WTC11 (cell line): ENCODE measurements at regions of chr3 and their contacts with region 1.

Region 1: DNA sequence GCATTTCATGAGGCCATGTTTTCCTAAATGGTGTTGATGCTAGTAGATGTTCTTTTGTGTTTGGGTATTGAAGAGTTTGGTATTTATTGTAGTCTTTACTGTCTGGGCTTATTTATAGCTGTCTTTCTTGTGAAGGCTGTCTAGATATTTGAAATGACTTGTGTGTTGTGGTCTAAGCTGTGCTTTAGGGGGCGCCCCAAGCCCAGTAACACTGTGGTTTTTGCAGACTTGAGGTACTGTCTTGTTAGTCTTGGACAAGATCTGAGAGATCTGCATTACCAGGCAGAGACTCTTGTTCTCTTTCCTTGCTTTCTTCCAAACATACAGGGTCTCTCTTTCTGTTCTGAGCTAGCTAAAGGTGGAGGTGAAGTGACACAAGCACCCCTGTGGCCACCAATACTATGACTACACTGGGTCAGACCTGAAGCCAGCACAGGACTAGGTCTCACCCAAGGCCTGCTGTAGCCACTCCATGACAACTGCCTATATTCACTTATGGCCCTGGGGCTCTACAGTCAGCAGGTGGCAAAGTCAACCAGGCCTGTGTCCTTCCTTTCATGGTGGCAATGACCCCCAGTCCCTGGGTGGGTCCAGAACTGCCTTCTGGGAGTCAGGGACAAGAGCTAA is 152.1 kb upstream of the TBC1D5 start:
- DNase-seq: peak; percentile 75
- ATAC-seq: peak; percentile 97
- H3K4me3 Mint-ChIP-seq: no peak overlapping the region
- H3K27ac Mint-ChIP-seq: no peak overlapping the region
- H3K4me1 Mint-ChIP-seq: peaks cover 12% of the 10 kb centered on the region
- H3K27me3 Mint-ChIP-seq: no peaks in the 10 kb centered on the region
- CTCF ChIP-seq: peak; percentile 73

Region 2: GRCh38 chr3:17882981-17883380 is 11.6 kb before region 1 on chr3:
- CTCF ChIA-PET with region 1: interaction called, 11 read pairs
- POLR2A ChIA-PET with region 1: no interaction called
- DNase-seq: no peak
- ATAC-seq: no peak
- H3K4me3 Mint-ChIP-seq: no peak overlapping the region
- H3K27ac Mint-ChIP-seq: no peak overlapping the region
- H3K4me1 Mint-ChIP-seq: peaks cover 10% of the 10 kb centered on the region
- H3K27me3 Mint-ChIP-seq: no peaks in the 10 kb centered on the region
- CTCF ChIP-seq: no peak

Region 3: GRCh38 chr3:17979252-17979651 is 84.7 kb after region 1 on chr3:
- CTCF ChIA-PET with region 1: interaction called, 23 read pairs
- POLR2A ChIA-PET with region 1: no interaction called
- DNase-seq: no peak
- ATAC-seq: peak; percentile 60
- H3K4me3 Mint-ChIP-seq: no peak overlapping the region
- H3K27ac Mint-ChIP-seq: no peak overlapping the region
- H3K4me1 Mint-ChIP-seq: no peaks in the 10 kb centered on the region
- H3K27me3 Mint-ChIP-seq: no peaks in the 10 kb centered on the region
- CTCF ChIP-seq: no peak

Region 4: GRCh38 chr3:18295171-18295920 is 400.8 kb after region 1 on chr3:
- CTCF ChIA-PET with region 1: interaction called, 28 read pairs
- POLR2A ChIA-PET with region 1: no interaction called
- DNase-seq: peak; percentile 89
- ATAC-seq: peak; percentile 100
- H3K4me3 Mint-ChIP-seq: no peak overlapping the region
- H3K27ac Mint-ChIP-seq: no peak overlapping the region
- H3K4me1 Mint-ChIP-seq: peaks cover 5% of the 10 kb centered on the region
- H3K27me3 Mint-ChIP-seq: no peaks in the 10 kb centered on the region
- CTCF ChIP-seq: peak; percentile 89

Region 5: DNA sequence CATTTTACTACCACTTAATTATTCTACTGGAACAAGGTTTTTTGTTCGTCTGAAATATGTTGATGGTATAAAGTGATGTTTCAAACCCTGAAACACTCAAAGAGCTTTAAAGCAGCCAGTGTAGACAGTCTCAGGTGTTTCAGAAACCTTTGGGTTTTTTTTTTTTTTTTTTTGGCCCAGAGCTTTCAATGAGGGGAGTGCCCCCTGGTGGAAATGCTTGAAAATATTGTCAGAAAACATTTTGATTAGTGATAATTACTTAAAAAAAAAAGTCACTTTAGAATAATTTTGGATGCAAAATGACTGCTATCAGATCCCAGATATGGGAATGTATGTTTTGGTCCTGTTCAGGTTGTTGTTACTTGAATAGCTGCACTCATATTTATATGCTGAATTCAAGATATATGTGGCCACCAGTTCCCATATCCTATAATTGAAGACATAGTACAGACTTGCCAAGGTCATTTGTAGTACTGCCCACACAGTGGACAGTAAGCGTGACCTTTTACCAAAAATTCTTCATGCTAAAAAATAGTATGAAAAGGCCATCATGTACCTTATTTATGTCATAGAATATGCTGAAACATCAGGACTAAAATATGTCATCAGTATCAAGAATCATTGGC is 494.7 kb after region 1 on chr3:
- CTCF ChIA-PET with region 1: interaction called, 13 read pairs
- POLR2A ChIA-PET with region 1: interaction called, 3 read pairs
- DNase-seq: no peak
- ATAC-seq: 0 out of 2 replicates have a peak, but pooled peaks have one; percentile 18
- H3K4me3 Mint-ChIP-seq: no peak overlapping the region
- H3K27ac Mint-ChIP-seq: no peak overlapping the region
- H3K4me1 Mint-ChIP-seq: peaks cover 21% of the 10 kb centered on the region
- H3K27me3 Mint-ChIP-seq: no peaks in the 10 kb centered on the region
- CTCF ChIP-seq: peak; percentile 25